PC-9 (cell line): ENCODE measurements at regions of chr6 and their contacts with region 1.

Region 1: GRCh38 chr6:111478749-111479148 is 4.3 kb downstream of the REV3L start:
- DNase-seq: peak in 1 of 2 experiments; percentile 45
- H3K4me3 ChIP-seq: no peak overlapping the region
- H3K27ac ChIP-seq: peak overlapping the region; percentile 48
- H3K4me1 ChIP-seq: peaks cover 49% of the 10 kb centered on the region
- H3K27me3 ChIP-seq: no peaks in the 10 kb centered on the region
- CTCF ChIP-seq: peak; percentile 57; the same call in 1 of the 2 replicates

Region 2: GRCh38 chr6:111399626-111400025 is 79.1 kb before region 1 on chr6:
- CTCF ChIA-PET with region 1: interaction called, 3 read pairs
- POLR2A ChIA-PET with region 1: interaction called, 13 read pairs
- intact Hi-C with region 1: no loop called
- DNase-seq: no peak
- H3K4me3 ChIP-seq: no peak overlapping the region
- H3K27ac ChIP-seq: no peak overlapping the region
- H3K4me1 ChIP-seq: no peaks in the 10 kb centered on the region
- H3K27me3 ChIP-seq: no peaks in the 10 kb centered on the region
- CTCF ChIP-seq: no peak

Region 3: GRCh38 chr6:111515259-111515658 is 36.5 kb after region 1 on chr6:
- CTCF ChIA-PET with region 1: no interaction called
- POLR2A ChIA-PET with region 1: no interaction called
- intact Hi-C with region 1: no loop called
- DNase-seq: no peak
- H3K4me3 ChIP-seq: no peak overlapping the region
- H3K27ac ChIP-seq: no peak overlapping the region
- H3K4me1 ChIP-seq: no peaks in the 10 kb centered on the region
- H3K27me3 ChIP-seq: no peaks in the 10 kb centered on the region
- CTCF ChIP-seq: no peak

Region 4: GRCh38 chr6:111605100-111605751 is 126.5 kb after region 1 on chr6:
- CTCF ChIA-PET with region 1: interaction called, 4 read pairs
- POLR2A ChIA-PET with region 1: interaction called, 24 read pairs
- intact Hi-C with region 1: no loop called
- DNase-seq: peak in 1 of 2 experiments; percentile 34
- H3K4me3 ChIP-seq: peak overlapping the region; percentile 79
- H3K27ac ChIP-seq: peak overlapping the region; percentile 95
- H3K4me1 ChIP-seq: peaks cover 37% of the 10 kb centered on the region
- H3K27me3 ChIP-seq: no peaks in the 10 kb centered on the region
- CTCF ChIP-seq: no peak